Activated CD4-positive, alpha-beta T cell treated with anti-CD3 and anti-CD28 coated beads for 36 hours (primary cell): ENCODE measurements at regions of chr15 and their contacts with region 1.

Region 1: GRCh38 chr15:85582131-85583079 is 202.0 kb downstream of the AKAP13 start:
- DNase-seq: peak; percentile 81
- ATAC-seq: peak; percentile 72
- H3K4me3 Mint-ChIP-seq: peak overlapping the region; percentile 78
- H3K27ac Mint-ChIP-seq: peak overlapping the region; percentile 92
- H3K4me1 Mint-ChIP-seq: peaks cover 83% of the 10 kb centered on the region
- H3K27me3 Mint-ChIP-seq: no peaks in the 10 kb centered on the region

Region 2: DNA sequence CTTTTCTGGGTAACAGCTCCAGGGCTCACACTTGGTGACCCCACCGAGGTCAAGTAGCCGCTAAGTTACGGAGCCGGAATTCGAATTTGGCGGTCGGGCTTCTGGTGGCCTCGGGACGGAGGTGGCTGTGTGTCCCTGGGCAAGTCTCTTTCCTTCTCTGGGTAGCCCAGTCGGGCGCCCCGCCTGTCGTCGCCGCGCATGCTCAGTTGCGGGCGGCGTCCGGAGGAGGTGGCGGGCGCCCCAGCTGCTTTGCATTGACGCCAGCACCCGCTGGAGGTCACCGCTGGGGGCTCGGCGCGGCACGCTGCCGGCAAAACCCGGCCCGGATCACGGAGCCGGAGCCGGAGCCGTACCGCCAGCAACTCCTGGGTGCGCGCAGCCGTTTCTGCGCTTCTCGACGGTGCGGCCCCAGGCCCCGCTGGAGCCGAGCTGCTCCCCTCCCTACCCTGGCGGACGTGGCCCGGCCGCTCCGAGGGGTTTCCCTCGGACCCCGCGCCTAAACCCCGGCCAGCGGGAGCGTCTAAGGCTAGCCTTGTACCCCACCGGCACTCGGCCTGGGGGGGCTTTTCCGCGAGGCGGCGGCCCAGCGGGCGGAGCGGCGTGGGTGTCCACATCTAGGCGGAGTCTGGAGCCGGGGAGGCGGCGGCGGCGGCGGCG is 601.2 kb before region 1 on chr15:
- CTCF ChIA-PET with region 1: no interaction called
- POLR2A ChIA-PET with region 1: no interaction called
- intact Hi-C with region 1: loop called in 1 of 2 experiments (anchors 5 kb)
- DNase-seq: peak; percentile 97
- ATAC-seq: peak; percentile 80
- H3K4me3 Mint-ChIP-seq: peak overlapping the region; percentile 84
- H3K27ac Mint-ChIP-seq: peak overlapping the region; percentile 89
- H3K4me1 Mint-ChIP-seq: peaks cover 43% of the 10 kb centered on the region
- H3K27me3 Mint-ChIP-seq: no peaks in the 10 kb centered on the region

Region 3: GRCh38 chr15:85178308-85178707 is 404.1 kb before region 1 on chr15:
- CTCF ChIA-PET with region 1: no interaction called
- POLR2A ChIA-PET with region 1: no interaction called
- intact Hi-C with region 1: no loop called
- DNase-seq: no peak
- ATAC-seq: no peak
- H3K4me3 Mint-ChIP-seq: no peak overlapping the region
- H3K27ac Mint-ChIP-seq: no peak overlapping the region
- H3K4me1 Mint-ChIP-seq: no peaks in the 10 kb centered on the region
- H3K27me3 Mint-ChIP-seq: peaks cover 6% of the 10 kb centered on the region

Region 4: GRCh38 chr15:85330901-85331588 is 251.4 kb before region 1 on chr15:
- CTCF ChIA-PET with region 1: no interaction called
- POLR2A ChIA-PET with region 1: no interaction called
- intact Hi-C with region 1: loop called in 1 of 2 experiments (anchors 5 kb)
- DNase-seq: peak; percentile 81
- ATAC-seq: peak; percentile 77
- H3K4me3 Mint-ChIP-seq: peak overlapping the region; percentile 80
- H3K27ac Mint-ChIP-seq: peak overlapping the region; percentile 88
- H3K4me1 Mint-ChIP-seq: peaks cover 46% of the 10 kb centered on the region
- H3K27me3 Mint-ChIP-seq: no peaks in the 10 kb centered on the region

Region 5: DNA sequence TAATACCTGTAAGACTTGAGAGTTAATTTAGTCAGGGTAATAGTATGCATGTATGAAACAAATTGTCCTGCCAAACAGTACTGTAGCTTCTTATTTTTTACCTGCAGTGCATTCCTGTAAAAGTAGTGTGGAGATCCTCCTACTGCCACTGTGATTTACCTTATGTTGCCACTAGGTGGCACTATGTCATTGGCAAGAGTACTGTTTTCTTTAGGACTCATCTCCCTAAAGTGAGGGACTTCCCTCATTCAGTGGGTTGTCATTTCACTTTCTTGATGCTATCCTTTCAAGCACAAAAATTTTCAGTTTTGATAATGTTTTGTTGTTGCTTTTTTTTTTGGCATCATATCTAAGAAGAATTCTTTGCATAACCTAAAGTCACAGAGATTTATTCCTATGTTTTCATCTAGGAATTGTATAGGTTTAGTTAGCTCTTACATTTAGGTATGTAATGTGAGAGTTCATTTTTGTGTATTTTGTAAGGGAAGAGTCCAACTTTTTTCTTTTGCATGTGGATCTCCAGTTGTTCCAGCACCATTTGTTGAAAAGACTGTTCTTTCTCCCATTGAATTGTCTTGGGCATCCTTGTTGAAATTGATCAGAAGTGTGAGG is 96.3 kb before region 1 on chr15:
- CTCF ChIA-PET with region 1: interaction called, 8 read pairs
- POLR2A ChIA-PET with region 1: interaction called, 4 read pairs
- intact Hi-C with region 1: loop called (anchors 2 to 5 kb)
- DNase-seq: peak; percentile 74
- ATAC-seq: peak; percentile 92
- H3K4me3 Mint-ChIP-seq: no peak overlapping the region
- H3K27ac Mint-ChIP-seq: peak overlapping the region; percentile 23
- H3K4me1 Mint-ChIP-seq: peaks cover 73% of the 10 kb centered on the region
- H3K27me3 Mint-ChIP-seq: no peaks in the 10 kb centered on the region

Region 6: DNA sequence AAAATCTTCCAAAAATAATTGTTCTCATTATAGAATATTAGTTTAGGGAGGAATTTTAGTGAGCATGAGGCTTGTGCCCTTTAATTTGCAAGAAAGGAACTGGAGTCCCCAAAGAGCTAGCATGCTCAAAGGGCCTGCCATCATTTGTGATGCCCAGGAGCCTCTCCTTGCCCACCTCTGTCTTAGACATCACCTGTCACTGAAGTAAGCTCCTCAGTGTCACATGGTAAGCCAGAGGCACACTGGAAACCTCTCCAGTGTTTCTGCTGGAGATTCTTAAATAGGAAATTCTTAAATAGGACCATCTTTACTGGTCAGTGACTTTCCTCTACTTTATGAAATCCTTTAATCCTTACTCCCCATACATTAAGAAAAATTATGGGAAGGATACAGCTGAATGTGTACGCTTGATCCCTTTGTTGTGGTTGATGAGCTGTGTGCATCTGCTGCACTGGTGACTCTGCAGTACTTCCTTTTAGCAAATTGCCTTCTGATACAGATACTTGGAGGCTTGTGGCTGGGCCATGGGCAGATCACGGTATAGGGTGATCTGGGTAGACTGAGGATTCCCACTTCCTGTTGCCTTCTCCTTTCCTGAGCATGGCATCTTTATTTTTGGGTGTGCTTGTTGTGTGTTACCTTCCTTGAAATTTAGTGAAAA is 14.9 kb after region 1 on chr15:
- CTCF ChIA-PET with region 1: no interaction called
- POLR2A ChIA-PET with region 1: no interaction called
- intact Hi-C with region 1: loop called (anchors 1 kb)
- DNase-seq: peak; percentile 52
- ATAC-seq: peak; percentile 81
- H3K4me3 Mint-ChIP-seq: no peak overlapping the region
- H3K27ac Mint-ChIP-seq: peak overlapping the region; percentile 53
- H3K4me1 Mint-ChIP-seq: peaks cover 55% of the 10 kb centered on the region
- H3K27me3 Mint-ChIP-seq: no peaks in the 10 kb centered on the region

Region 7: DNA sequence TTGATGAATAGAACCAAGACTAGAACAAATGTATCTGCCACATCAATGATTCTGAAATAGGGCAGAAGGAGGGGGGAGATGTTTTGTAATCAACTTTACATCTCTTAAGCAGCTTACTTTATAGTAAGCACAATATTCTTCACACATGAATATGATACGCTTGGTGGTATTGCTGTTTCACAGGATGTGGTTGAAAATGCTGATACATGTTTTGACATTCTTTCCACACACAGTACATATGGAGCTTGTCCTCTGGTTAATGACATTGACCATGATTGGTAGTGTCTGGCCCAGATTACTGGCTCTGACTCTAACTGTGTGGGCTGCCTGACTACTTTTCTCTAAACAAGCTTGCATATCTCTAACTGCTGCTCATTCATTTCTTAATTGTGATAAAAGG is 43.5 kb after region 1 on chr15:
- CTCF ChIA-PET with region 1: interaction called, 3 read pairs
- POLR2A ChIA-PET with region 1: interaction called, 11 read pairs
- intact Hi-C with region 1: no loop called
- DNase-seq: peak; percentile 48
- ATAC-seq: peak; percentile 84
- H3K4me3 Mint-ChIP-seq: peak overlapping the region; percentile 22
- H3K27ac Mint-ChIP-seq: peak overlapping the region; percentile 90
- H3K4me1 Mint-ChIP-seq: peaks cover 69% of the 10 kb centered on the region
- H3K27me3 Mint-ChIP-seq: no peaks in the 10 kb centered on the region

Region 8: GRCh38 chr15:85689729-85690128 is 107.3 kb after region 1 on chr15:
- CTCF ChIA-PET with region 1: interaction called, 3 read pairs
- POLR2A ChIA-PET with region 1: interaction called, 18 read pairs
- intact Hi-C with region 1: loop called in 1 of 2 experiments (anchors 1 kb)
- DNase-seq: peak; percentile 75
- ATAC-seq: peak; percentile 52
- H3K4me3 Mint-ChIP-seq: peak overlapping the region; percentile 78
- H3K27ac Mint-ChIP-seq: peak overlapping the region; percentile 98
- H3K4me1 Mint-ChIP-seq: peaks cover 77% of the 10 kb centered on the region
- H3K27me3 Mint-ChIP-seq: no peaks in the 10 kb centered on the region